ENCODE measurements at regions of chr4 and their contacts with region 1.

Region 1: GRCh38 chr4:52545099-52546069 is 113.7 kb downstream of the USP46 start:
- DNase-seq: peak; percentile 82 to 88
- ATAC-seq: peak; percentile 92
- H3K4me3 ChIP-seq: no peak overlapping the region
- H3K27ac ChIP-seq: no peak overlapping the region
- H3K4me1 ChIP-seq: no peaks in the 10 kb centered on the region
- H3K27me3 ChIP-seq: no peaks in the 10 kb centered on the region

Region 2: GRCh38 chr4:52369649-52370048 is 175.7 kb before region 1 on chr4:
- intact Hi-C with region 1: loop called in 1 of 2 experiments (anchors 5 kb)
- DNase-seq: no peak
- ATAC-seq: no peak
- H3K4me3 ChIP-seq: no peak overlapping the region
- H3K27ac ChIP-seq: no peak overlapping the region
- H3K4me1 ChIP-seq: no peaks in the 10 kb centered on the region
- H3K27me3 ChIP-seq: no peaks in the 10 kb centered on the region

Region 3: GRCh38 chr4:52659001-52659721 is 113.8 kb after region 1 on chr4 and contains the start of gene USP46:
- intact Hi-C with region 1: loop called (anchors 5 kb)
- DNase-seq: peak; percentile 84 to 94
- ATAC-seq: peak; percentile 94
- H3K4me3 ChIP-seq: peak within 1 kb of the TSS; percentile 92 to 94
- H3K27ac ChIP-seq: peak within 1 kb of the TSS; percentile 79 to 88
- H3K4me1 ChIP-seq: peaks cover 0 to 1% of the 10 kb centered on the region in 2 donors
- H3K27me3 ChIP-seq: no peaks in the 10 kb centered on the region
- total RNA-seq, gene USP46: 23.7 to 24.1 TPM

Region 4: DNA sequence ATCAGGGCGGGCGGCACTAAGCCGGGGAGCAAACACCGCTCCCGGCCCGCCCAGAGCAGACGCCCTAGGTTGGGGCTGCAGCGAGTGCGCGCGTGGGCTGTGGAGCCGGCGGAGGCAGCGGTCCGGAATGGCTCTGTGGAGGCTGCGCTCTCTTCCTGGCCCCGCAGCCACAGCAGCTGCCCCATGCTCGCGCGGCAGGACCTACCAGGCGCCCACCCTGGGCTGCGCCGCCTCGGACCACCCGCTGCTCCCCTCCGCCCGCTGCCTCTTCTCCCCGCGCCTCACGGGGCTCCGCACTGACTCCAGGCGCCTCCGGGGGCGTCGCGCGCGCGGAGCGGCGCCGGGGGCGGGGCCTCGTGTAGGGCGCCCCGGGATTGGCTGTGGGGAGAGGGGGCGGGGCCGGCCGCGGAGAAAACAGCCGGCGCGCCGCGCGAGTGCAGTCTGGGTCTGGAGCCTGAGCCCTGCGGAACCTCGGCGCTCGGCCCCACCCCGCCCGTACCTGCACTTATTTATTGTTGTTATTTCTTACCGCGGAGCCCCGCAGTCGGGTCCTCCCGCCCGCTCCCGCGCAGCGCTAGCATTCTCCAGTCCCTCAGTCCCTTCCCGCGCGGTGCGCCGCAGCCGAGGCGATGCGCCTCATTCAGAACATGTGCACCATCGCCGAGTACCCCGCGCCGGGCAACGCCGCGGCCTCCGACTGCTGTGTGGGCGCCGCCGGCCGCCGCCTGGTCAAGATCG is 316.7 kb after region 1 on chr4 and contains the start of gene RASL11B:
- intact Hi-C with region 1: loop called (anchors 5 kb)
- DNase-seq: peak; percentile 89 to 94
- ATAC-seq: peak; percentile 97
- H3K4me3 ChIP-seq: peak within 1 kb of the TSS; percentile 71 to 75
- H3K27ac ChIP-seq: peak within 1 kb of the TSS; percentile 11 to 78
- H3K4me1 ChIP-seq: peaks cover 0 to 2% of the 10 kb centered on the region in 2 donors
- H3K27me3 ChIP-seq: no peaks in the 10 kb centered on the region
- total RNA-seq, gene RASL11B: 5.6 to 5.7 TPM

Region 5: GRCh38 chr4:52983563-52984303 is 438.3 kb after region 1 on chr4:
- intact Hi-C with region 1: loop called (anchors 2 kb)
- DNase-seq: no peak
- ATAC-seq: peak; percentile 80
- H3K4me3 ChIP-seq: no peak overlapping the region
- H3K27ac ChIP-seq: no peak overlapping the region
- H3K4me1 ChIP-seq: no peaks in the 10 kb centered on the region
- H3K27me3 ChIP-seq: no peaks in the 10 kb centered on the region

Measured in aorta (tissue), 5 donors.